Heart right ventricle (tissue), 16 donors: ENCODE measurements at regions of chr3 and their contacts with region 1.

Region 1: GRCh38 chr3:117068301-117068700 is 358.7 kb downstream of the TUSC7 start:
- DNase-seq: no peak
- ATAC-seq: no peak
- H3K4me3 ChIP-seq: no peak overlapping the region
- H3K27ac ChIP-seq: no peak overlapping the region
- H3K4me1 ChIP-seq: peaks cover 0 to 11% (median 0%) of the 10 kb centered on the region in 9 donors
- H3K27me3 ChIP-seq: no peaks in the 10 kb centered on the region
- CTCF ChIP-seq: no peak

Region 2: DNA sequence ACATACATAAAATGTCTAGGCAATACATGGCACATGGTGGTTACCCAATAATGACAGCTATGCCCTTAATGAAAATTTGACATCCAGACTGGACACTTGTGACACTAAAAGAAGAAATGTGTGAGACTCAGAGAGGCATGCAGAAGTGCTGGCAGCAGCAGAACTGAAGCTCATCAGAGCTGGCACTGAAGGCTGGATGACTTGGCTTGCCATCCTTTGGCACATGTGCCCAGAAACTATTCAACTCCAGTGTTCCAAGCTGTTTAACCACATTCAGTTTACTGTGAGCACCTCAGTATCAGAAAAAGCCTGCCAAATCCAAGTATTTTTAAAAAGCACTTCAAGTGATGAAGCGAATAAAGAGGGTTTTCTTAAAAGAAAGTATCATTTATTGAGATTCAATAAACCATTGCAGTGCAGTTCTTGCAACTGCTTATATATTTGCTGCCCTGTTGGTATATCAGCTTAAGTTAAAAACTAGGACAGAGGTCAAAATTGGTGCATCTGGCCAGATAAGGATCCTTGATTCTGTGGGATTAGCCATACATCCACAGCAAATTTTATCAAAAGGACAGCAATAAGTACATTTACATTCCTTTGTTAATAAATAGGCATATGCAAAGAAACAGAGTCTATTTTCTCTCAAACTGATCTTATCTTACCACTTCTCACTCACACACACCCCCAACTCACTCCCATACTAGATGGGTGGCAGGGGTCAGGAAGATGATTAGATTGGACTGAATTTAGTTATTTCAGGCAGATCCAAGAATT is 1950.6 kb after region 1 on chr3:
- intact Hi-C with region 1: loop called in 1 of 10 experiments (anchors 5 kb)
- DNase-seq: peak in 1 of 2 donors; percentile 11
- ATAC-seq: peak in 2 of 8 donors; percentile 55 to 85
- H3K4me3 ChIP-seq: no peak overlapping the region
- H3K27ac ChIP-seq: peak overlapping the region in 2 of 10 donors; percentile 7 to 33
- H3K4me1 ChIP-seq: no peaks in the 10 kb centered on the region
- H3K27me3 ChIP-seq: no peaks in the 10 kb centered on the region
- CTCF ChIP-seq: no peak